ENCODE measurements at regions of chr3 and their contacts with region 1.

Region 1: DNA sequence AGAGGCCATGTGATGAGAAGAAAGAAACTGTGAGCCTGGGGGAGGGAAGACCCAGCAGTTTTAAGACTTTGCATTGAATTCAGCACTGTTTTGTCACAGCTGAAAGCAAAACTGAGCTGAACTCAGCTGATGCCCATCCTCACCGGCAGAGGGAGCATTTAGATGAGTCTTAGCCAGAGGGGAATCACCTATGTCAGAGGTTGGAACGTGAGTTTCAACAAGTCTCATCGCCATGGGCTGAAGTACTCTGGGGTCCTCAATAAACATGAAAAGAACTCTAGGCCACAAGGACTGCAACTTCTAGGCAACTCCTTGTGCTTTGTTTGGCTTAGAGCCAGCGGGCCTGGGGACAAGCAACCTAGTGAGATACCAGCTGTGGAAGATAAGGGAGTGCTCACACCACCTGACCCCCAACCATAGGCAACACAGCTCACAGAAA is 324.5 kb downstream of the TBL1XR1 start:
- DNase-seq: peak; percentile 3 to 30 (median 10)
- H3K4me3 ChIP-seq: no peak overlapping the region
- H3K4me3 Mint-ChIP-seq: no peak overlapping the region
- H3K27ac ChIP-seq: no peak overlapping the region
- H3K27ac Mint-ChIP-seq: no peak overlapping the region
- H3K4me1 ChIP-seq: no peaks in the 10 kb centered on the region
- H3K4me1 Mint-ChIP-seq: peaks cover 5% of the 10 kb centered on the region
- H3K27me3 ChIP-seq: no peaks in the 10 kb centered on the region
- H3K27me3 Mint-ChIP-seq: peaks cover 0 to 2% (median 0%) of the 10 kb centered on the region in 3 donors
- CTCF ChIP-seq: peak; percentile 74

Region 2: GRCh38 chr3:176623468-176624150 is 249.2 kb before region 1 on chr3:
- intact Hi-C with region 1: no loop called
- DNase-seq: no peak
- H3K4me3 ChIP-seq: no peak overlapping the region
- H3K4me3 Mint-ChIP-seq: no peak overlapping the region
- H3K27ac ChIP-seq: no peak overlapping the region
- H3K27ac Mint-ChIP-seq: no peak overlapping the region
- H3K4me1 ChIP-seq: no peaks in the 10 kb centered on the region
- H3K4me1 Mint-ChIP-seq: no peaks in the 10 kb centered on the region
- H3K27me3 ChIP-seq: no peaks in the 10 kb centered on the region
- H3K27me3 Mint-ChIP-seq: no peaks in the 10 kb centered on the region
- CTCF ChIP-seq: no peak

Region 3: DNA sequence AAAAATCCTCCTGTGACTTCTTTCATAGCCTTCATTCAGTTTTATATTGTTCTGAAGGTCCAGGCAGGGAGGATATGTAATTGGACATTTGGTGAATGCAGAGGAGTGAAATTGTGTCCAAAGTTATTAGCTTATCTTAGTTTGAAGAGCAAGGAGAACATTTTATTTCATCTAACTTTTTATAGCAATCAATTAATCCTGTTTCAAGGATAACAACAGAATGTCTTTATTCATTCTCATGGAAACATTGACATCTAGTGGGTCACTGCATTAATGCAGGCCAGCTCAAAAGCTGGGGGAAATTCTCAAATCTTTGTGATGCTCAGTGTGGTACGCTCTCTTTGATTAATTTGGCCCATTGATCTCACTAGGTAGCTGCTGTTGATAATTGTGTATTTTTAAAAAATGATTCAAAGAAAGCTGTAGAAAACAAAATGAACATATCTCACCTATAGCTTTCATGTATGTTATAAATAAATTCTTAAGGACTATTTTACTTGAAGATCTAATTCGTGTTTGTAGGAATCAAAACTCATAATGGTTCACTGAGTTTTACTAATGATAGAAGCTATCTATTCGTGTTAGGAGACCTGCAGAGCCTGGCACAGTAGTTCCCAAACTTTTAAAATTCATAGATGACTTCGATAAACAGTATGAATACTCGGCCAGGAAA is 1512.6 kb after region 1 on chr3:
- intact Hi-C with region 1: loop called in 1 of 2 experiments (anchors 10 kb)
- DNase-seq: peak in 2 of 3 donors; percentile 3 to 9
- H3K4me3 ChIP-seq: no peak overlapping the region
- H3K4me3 Mint-ChIP-seq: no peak overlapping the region
- H3K27ac ChIP-seq: no peak overlapping the region
- H3K27ac Mint-ChIP-seq: no peak overlapping the region
- H3K4me1 ChIP-seq: no peaks in the 10 kb centered on the region
- H3K4me1 Mint-ChIP-seq: no peaks in the 10 kb centered on the region
- H3K27me3 ChIP-seq: no peaks in the 10 kb centered on the region
- H3K27me3 Mint-ChIP-seq: no peaks in the 10 kb centered on the region
- CTCF ChIP-seq: peak; percentile 68

Measured in CD14-positive monocyte (primary cell).